ENCODE measurements at regions of chr7 and their contacts with region 1.

Region 1: GRCh38 chr7:69708857-69709256 is 110.6 kb downstream of the AUTS2 start:
- DNase-seq: no peak
- H3K4me3 ChIP-seq: no peak overlapping the region
- H3K27ac ChIP-seq: no peak overlapping the region
- H3K4me1 ChIP-seq: no peaks in the 10 kb centered on the region
- H3K27me3 ChIP-seq: no peaks in the 10 kb centered on the region
- CTCF ChIP-seq: no peak

Region 2: DNA sequence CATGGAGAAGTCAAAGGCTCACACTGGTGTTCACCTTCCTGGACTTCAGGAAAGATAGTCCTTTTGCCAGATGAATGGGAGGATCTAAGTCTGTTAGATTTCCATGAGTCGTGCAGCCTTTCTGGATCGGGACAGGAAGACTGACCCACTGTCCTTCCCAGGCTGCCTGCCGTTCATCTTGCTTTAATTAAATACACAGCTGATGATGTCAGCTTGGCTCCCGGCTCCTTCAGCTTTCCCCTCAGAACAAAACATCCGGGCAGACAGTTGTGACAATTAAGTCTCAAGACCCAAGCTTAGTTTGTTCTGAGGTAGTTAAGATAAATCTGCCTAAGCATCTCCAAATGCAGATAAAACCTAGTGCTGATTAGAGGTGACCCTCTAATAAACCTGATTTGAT is 52.0 kb before region 1 on chr7:
- dilution Hi-C with region 1: loop called (anchors 5 kb)
- DNase-seq: no peak
- H3K4me3 ChIP-seq: no peak overlapping the region
- H3K27ac ChIP-seq: no peak overlapping the region
- H3K4me1 ChIP-seq: no peaks in the 10 kb centered on the region
- H3K27me3 ChIP-seq: no peaks in the 10 kb centered on the region
- CTCF ChIP-seq: no peak

Measured in keratinocyte (primary cell).